HepG2 (cell line): ENCODE measurements at regions of chr16 and their contacts with region 1.

Region 1: DNA sequence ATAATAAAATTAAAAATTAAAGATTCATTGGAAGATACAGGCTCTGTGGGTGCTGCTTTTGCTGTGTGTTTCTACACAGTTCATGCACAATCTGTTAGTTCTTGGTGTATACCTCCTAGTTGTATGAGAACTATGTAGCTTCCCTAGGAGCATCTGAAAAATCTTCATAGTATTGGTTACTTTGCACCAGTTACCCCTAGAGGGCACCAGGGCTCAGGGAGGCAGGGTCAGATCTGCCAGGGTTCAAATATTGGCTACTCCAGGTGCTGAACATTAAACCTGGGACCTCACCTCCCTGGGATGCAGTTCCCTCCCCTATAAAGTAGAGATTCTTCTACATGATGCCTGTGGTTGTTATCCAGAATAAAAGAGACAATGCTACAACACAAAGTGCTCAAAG is 583.0 kb upstream of the CDH11 start:
- DNase-seq: no peak
- ATAC-seq: peak; percentile 35; the same call in 1 of the 3 replicates
- H3K4me3 ChIP-seq: no peak overlapping the region
- H3K27ac ChIP-seq: no peak overlapping the region
- H3K4me1 ChIP-seq: no peaks in the 10 kb centered on the region
- H3K27me3 ChIP-seq: no peaks in the 10 kb centered on the region
- CTCF ChIP-seq: peak; percentile 33; the same call in 1 of the 2 replicates
- EP300 ChIP-seq: no peak
- POLR2A ChIP-seq: no peak
- RAD21 ChIP-seq: no peak

Region 2: DNA sequence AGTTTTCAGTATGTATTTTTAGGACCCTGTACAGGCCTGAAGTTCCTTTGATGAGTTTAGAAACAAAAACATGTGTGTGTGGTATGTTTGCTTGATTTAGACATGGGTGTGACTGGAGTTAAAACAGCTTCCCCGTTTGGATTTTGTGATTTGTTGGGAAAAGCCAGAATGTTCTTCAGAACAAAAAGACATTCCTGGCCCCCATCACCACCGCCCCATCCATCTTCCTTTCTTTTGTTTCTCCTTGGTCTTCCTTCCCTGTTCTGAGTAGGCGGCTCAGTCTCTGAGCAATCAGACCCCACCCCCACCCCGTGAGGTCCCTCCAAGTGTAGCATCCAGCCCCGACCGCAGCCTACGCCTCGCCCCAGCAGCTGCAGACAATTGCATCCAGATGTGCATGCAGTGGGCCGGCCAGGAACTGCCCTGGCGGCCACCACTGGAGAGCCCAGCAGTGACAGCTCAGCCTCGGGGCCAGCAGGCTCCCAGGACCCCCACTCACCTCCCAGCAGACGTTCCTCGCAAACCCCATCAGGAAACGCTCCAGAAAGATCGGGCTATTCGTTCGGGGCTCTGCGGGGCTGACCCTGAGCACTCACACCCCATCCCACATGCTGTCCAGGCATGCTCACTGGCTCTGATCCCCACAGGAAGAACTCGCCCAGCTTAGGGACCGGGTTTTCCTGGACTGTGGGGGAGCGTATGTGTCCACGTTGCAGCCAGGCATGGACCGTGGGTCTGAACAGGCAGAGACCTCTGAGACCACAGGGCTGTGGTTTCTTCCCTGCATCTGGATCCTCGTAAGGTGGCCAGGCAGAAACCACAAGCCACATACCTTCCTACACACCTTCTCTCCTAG is 561.8 kb after region 1 on chr16:
- CTCF ChIA-PET with region 1: interaction called, 3 read pairs
- POLR2A ChIA-PET with region 1: no interaction called
- in situ Hi-C with region 1: loop called (anchors 10 kb)
- intact Hi-C with region 1: no loop called
- DNase-seq: no peak
- ATAC-seq: no peak
- H3K4me3 ChIP-seq: no peak overlapping the region
- H3K27ac ChIP-seq: no peak overlapping the region
- H3K4me1 ChIP-seq: 0 out of 2 replicates have a peak, but pooled peaks cover 4% of the 10 kb centered on the region
- H3K27me3 ChIP-seq: peaks cover 5 to 76% of the 10 kb centered on the region in 2 experiments; a peak in 4 of 5 replicates
- CTCF ChIP-seq: no peak
- EP300 ChIP-seq: no peak
- POLR2A ChIP-seq: no peak
- RAD21 ChIP-seq: no peak